ENCODE measurements at regions of chr17 and their contacts with region 1.

Region 1: DNA sequence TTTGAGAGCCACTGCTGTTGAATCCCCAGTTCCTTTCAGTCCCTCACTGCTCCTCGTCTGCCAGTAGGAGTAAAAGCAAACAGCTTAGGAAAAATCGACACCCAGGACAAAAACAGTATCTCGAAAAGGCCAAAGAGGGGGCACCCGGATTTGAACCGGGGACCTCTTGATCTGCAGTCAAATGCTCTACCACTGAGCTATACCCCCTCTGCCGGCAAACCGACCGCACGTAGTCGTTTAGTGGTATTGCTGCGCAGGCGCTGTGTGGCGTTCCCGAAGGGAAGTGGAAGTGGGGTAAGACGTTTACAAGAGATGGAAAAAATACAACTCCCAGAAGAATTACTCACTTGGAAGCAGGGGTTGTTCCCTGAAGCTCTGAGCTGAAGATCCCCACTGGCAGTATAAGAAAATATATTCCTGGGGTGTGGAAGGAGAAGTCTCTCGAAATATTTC is 2.2 kb upstream of the PLXDC1 start:
- DNase-seq: peak in 1 of 2 donors; percentile 99
- H3K4me3 ChIP-seq: peak overlapping the region; percentile 86 to 88
- H3K27ac ChIP-seq: peak overlapping the region; percentile 100
- H3K4me1 ChIP-seq: peaks cover 21% of the 10 kb centered on the region
- H3K27me3 ChIP-seq: no peaks in the 10 kb centered on the region
- CTCF ChIP-seq: peak in 1 of 3 experiments; percentile 35
- POLR2A ChIP-seq: peak in 1 of 2 donors; percentile 33

Region 2: GRCh38 chr17:38869526-38870258 is 283.9 kb before region 1 on chr17 and contains the start of gene LASP1:
- intact Hi-C with region 1: loop called (anchors 5 kb)
- DNase-seq: no peak
- H3K4me3 ChIP-seq: peak within 1 kb of the TSS; percentile 91 to 96
- H3K27ac ChIP-seq: peak within 1 kb of the TSS; percentile 95
- H3K4me1 ChIP-seq: peaks cover 51% of the 10 kb centered on the region
- H3K27me3 ChIP-seq: no peaks in the 10 kb centered on the region
- CTCF ChIP-seq: peak in 1 of 3 experiments; percentile 8
- POLR2A ChIP-seq: peak in 1 of 2 donors; percentile 97
- total RNA-seq, gene LASP1: 69.0 TPM

Region 3: GRCh38 chr17:38982858-38983746 is 170.5 kb before region 1 on chr17:
- intact Hi-C with region 1: loop called (anchors 2 kb)
- DNase-seq: no peak
- H3K4me3 ChIP-seq: no peak overlapping the region
- H3K27ac ChIP-seq: no peak overlapping the region
- H3K4me1 ChIP-seq: peaks cover 4% of the 10 kb centered on the region
- H3K27me3 ChIP-seq: no peaks in the 10 kb centered on the region
- CTCF ChIP-seq: peak; percentile 54 to 83 (median 64)
- POLR2A ChIP-seq: no peak

Region 4: GRCh38 chr17:39073916-39074315 is 79.7 kb before region 1 on chr17:
- intact Hi-C with region 1: loop called (anchors 5 kb)
- DNase-seq: no peak
- H3K4me3 ChIP-seq: no peak overlapping the region
- H3K27ac ChIP-seq: no peak overlapping the region
- H3K4me1 ChIP-seq: peaks cover 4% of the 10 kb centered on the region
- H3K27me3 ChIP-seq: no peaks in the 10 kb centered on the region
- CTCF ChIP-seq: no peak
- POLR2A ChIP-seq: no peak